CD14-positive monocyte (primary cell): ENCODE measurements at regions of chr9 and their contacts with region 1.

Region 1: GRCh38 chr9:89597711-89598625 is 6.8 kb upstream of the GADD45G start:
- DNase-seq: peak; percentile 42 to 62 (median 59)
- H3K4me3 ChIP-seq: no peak overlapping the region
- H3K4me3 Mint-ChIP-seq: no peak overlapping the region
- H3K27ac ChIP-seq: no peak overlapping the region
- H3K27ac Mint-ChIP-seq: peak overlapping the region in 1 of 7 donors; percentile 45
- H3K4me1 ChIP-seq: peaks cover 2 to 3% of the 10 kb centered on the region in 2 donors
- H3K4me1 Mint-ChIP-seq: peaks cover 4% of the 10 kb centered on the region
- H3K27me3 ChIP-seq: no peaks in the 10 kb centered on the region
- H3K27me3 Mint-ChIP-seq: peaks cover 3 to 13% (median 7%) of the 10 kb centered on the region in 3 donors
- CTCF ChIP-seq: peak; percentile 79

Region 2: DNA sequence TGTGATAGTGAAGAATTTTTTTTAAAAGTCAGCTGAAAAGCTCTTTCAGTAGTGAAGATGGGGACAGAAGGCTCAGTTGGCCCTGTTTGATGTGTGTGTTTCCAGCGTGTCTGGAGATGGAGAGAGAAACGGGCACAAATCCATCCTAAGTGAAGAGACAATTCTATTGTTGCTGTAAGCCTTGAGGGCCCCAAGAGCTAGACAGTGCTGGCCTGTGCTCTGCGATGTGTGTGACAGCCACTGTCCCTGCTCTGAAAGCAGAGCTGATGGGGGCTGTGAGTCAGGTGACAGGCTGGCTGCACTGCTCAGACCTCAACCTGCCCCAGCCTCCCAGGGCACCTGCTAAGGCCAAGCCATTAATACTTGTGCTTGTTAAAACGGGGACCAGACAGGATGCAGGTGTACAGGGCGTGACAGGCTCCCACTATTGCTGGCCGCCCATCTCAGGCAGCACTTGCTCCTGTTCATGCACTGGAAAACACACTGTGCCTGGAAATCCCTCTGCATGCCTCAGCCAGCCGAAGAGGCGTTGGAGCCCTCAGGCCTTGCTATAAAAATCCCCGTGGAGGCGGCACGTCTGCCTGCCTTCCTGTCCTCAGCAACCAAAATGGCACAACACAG is 55.5 kb before region 1 on chr9:
- intact Hi-C with region 1: no loop called
- DNase-seq: no peak
- H3K4me3 ChIP-seq: no peak overlapping the region
- H3K4me3 Mint-ChIP-seq: no peak overlapping the region
- H3K27ac ChIP-seq: no peak overlapping the region
- H3K27ac Mint-ChIP-seq: no peak overlapping the region
- H3K4me1 ChIP-seq: peaks cover 0 to 5% of the 10 kb centered on the region in 2 donors
- H3K4me1 Mint-ChIP-seq: peaks cover 11% of the 10 kb centered on the region
- H3K27me3 ChIP-seq: no peaks in the 10 kb centered on the region
- H3K27me3 Mint-ChIP-seq: peaks cover 0 to 2% (median 0%) of the 10 kb centered on the region in 3 donors
- CTCF ChIP-seq: no peak

Region 3: DNA sequence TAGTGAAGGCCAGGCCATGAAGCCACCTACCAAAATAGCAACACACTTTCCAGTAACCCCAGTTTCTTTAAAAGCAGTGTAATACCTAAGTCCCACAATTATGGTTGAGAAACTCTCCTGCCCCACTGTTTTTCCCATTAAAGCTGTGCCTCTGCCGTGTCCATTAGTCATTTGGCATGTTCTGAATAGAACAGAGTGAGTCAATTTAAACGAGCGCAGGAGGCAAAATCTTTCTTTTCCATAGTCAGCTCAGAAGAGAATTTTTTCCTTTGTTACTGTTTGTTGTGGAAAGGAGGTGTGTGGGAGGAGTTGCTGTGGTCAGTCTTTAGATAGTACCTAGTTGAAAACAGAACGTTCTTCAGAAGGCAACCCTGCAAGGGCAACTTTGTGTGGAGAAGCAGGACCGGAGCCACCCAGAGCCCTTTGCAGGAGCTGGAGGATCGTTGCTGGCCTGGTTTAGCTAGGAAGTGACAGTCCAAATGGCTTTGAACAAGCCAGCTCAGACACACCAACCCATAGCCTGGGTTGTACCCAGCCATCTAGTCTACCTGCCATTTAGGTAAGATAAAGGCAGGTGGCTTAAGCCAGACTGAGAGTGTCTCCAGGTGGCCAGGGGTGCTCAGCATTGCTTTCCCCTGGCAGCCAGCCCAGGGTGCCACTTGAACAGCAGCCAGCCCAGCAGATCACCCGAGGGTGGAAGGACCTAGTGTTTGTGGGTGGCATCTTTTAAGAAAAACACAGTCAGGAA is 37.2 kb after region 1 on chr9:
- intact Hi-C with region 1: no loop called
- DNase-seq: no peak
- H3K4me3 ChIP-seq: no peak overlapping the region
- H3K4me3 Mint-ChIP-seq: no peak overlapping the region
- H3K27ac ChIP-seq: no peak overlapping the region
- H3K27ac Mint-ChIP-seq: no peak overlapping the region
- H3K4me1 ChIP-seq: peaks cover 4 to 5% of the 10 kb centered on the region in 2 donors
- H3K4me1 Mint-ChIP-seq: peaks cover 6% of the 10 kb centered on the region
- H3K27me3 ChIP-seq: no peaks in the 10 kb centered on the region
- H3K27me3 Mint-ChIP-seq: peaks cover 1 to 8% (median 2%) of the 10 kb centered on the region in 3 donors
- CTCF ChIP-seq: no peak

Region 4: GRCh38 chr9:90102292-90102901 is 504.4 kb after region 1 on chr9:
- intact Hi-C with region 1: loop called (anchors 2 kb)
- DNase-seq: peak; percentile 77 to 90 (median 89)
- H3K4me3 ChIP-seq: no peak overlapping the region
- H3K4me3 Mint-ChIP-seq: no peak overlapping the region
- H3K27ac ChIP-seq: no peak overlapping the region
- H3K27ac Mint-ChIP-seq: no peak overlapping the region
- H3K4me1 ChIP-seq: peaks cover 10 to 11% of the 10 kb centered on the region in 2 donors
- H3K4me1 Mint-ChIP-seq: peaks cover 11% of the 10 kb centered on the region
- H3K27me3 ChIP-seq: no peaks in the 10 kb centered on the region
- H3K27me3 Mint-ChIP-seq: peaks cover 0 to 6% (median 3%) of the 10 kb centered on the region in 3 donors
- CTCF ChIP-seq: peak; percentile 87